Activated B cell treated with CpG ODN at 0.5 μM for 24 hours (primary cell): ENCODE measurements at regions of chr1 and their contacts with region 1.

Region 1: GRCh38 chr1:50774759-50775351 is 185.2 kb downstream of the FAF1 start:
- DNase-seq: no peak
- ATAC-seq: no peak
- H3K4me3 Mint-ChIP-seq: no peak overlapping the region
- H3K27ac Mint-ChIP-seq: no peak overlapping the region
- H3K4me1 Mint-ChIP-seq: peaks cover 5% of the 10 kb centered on the region
- H3K27me3 Mint-ChIP-seq: no peaks in the 10 kb centered on the region
- CTCF ChIP-seq: peak; percentile 86

Region 2: GRCh38 chr1:50724626-50725286 is 50.1 kb before region 1 on chr1:
- CTCF ChIA-PET with region 1: no interaction called
- POLR2A ChIA-PET with region 1: no interaction called
- intact Hi-C with region 1: no loop called
- DNase-seq: no peak
- ATAC-seq: peak; percentile 75
- H3K4me3 Mint-ChIP-seq: no peak overlapping the region
- H3K27ac Mint-ChIP-seq: peak overlapping the region; percentile 62
- H3K4me1 Mint-ChIP-seq: peaks cover 42% of the 10 kb centered on the region
- H3K27me3 Mint-ChIP-seq: no peaks in the 10 kb centered on the region
- CTCF ChIP-seq: no peak

Region 3: DNA sequence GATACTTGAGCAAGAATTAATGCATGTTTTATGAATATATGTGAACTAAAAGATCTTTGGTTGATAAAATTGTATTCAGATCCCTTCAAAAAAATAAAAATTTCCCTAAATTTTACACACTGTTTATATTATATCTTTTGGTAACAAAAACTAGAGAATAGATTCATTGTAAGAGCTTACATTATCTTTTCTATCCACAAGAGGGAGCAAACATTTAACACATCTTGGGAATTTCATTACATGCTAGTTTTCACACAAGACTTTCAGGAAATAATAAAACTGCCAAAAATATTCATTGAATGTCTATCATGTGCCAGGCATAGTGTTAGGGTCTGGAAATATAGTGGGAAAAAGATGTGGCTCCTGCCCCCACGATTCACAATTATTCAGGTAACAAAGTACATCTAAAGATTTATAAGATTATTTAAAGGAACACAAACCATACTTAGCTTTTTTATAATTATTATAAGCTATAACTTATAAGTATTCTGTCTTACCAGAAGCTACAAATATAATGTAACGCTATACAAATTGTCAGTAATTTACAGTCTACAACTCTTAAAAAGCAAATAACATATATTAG is 154.6 kb after region 1 on chr1:
- CTCF ChIA-PET with region 1: interaction called, 12 read pairs
- POLR2A ChIA-PET with region 1: no interaction called
- intact Hi-C with region 1: loop called (anchors 10 kb)
- DNase-seq: no peak
- ATAC-seq: no peak
- H3K4me3 Mint-ChIP-seq: no peak overlapping the region
- H3K27ac Mint-ChIP-seq: no peak overlapping the region
- H3K4me1 Mint-ChIP-seq: peaks cover 34% of the 10 kb centered on the region
- H3K27me3 Mint-ChIP-seq: no peaks in the 10 kb centered on the region
- CTCF ChIP-seq: no peak

Region 4: GRCh38 chr1:51044834-51045233 is 270.0 kb after region 1 on chr1:
- CTCF ChIA-PET with region 1: interaction called, 3 read pairs
- POLR2A ChIA-PET with region 1: no interaction called
- intact Hi-C with region 1: loop called (anchors 1 kb)
- DNase-seq: no peak
- ATAC-seq: no peak
- H3K4me3 Mint-ChIP-seq: no peak overlapping the region
- H3K27ac Mint-ChIP-seq: no peak overlapping the region
- H3K4me1 Mint-ChIP-seq: no peaks in the 10 kb centered on the region
- H3K27me3 Mint-ChIP-seq: peaks cover 12% of the 10 kb centered on the region
- CTCF ChIP-seq: no peak

Region 5: DNA sequence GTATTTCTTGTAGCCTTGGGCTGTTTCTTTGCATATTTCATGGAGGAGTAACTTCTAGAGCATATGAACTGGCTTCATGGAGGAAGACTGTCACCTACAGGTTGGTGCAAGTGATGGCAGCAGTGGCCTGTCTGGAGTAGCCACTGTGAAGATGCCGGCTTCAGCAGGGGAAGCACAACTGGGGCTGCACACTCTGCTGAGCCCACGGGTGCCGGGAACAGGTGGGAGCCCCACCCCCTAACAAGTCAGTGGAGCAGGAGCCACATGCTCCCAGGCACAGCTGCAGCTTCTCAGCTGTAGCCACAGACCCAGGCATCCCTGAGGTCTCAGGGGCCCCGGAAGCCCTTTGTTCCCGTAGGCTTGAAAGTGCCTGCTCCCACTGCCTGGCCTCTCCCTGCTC is 284.0 kb after region 1 on chr1:
- CTCF ChIA-PET with region 1: interaction called, 3 read pairs
- POLR2A ChIA-PET with region 1: no interaction called
- intact Hi-C with region 1: loop called (anchors 2 kb)
- DNase-seq: no peak
- ATAC-seq: no peak
- H3K4me3 Mint-ChIP-seq: no peak overlapping the region
- H3K27ac Mint-ChIP-seq: no peak overlapping the region
- H3K4me1 Mint-ChIP-seq: no peaks in the 10 kb centered on the region
- H3K27me3 Mint-ChIP-seq: peaks cover 13% of the 10 kb centered on the region
- CTCF ChIP-seq: no peak

Region 6: GRCh38 chr1:51296383-51297357 is 521.8 kb after region 1 on chr1:
- CTCF ChIA-PET with region 1: interaction called, 4 read pairs
- POLR2A ChIA-PET with region 1: no interaction called
- intact Hi-C with region 1: loop called (anchors 1 kb)
- DNase-seq: peak; percentile 71
- ATAC-seq: peak; percentile 65
- H3K4me3 Mint-ChIP-seq: peak overlapping the region; percentile 68
- H3K27ac Mint-ChIP-seq: no peak overlapping the region
- H3K4me1 Mint-ChIP-seq: peaks cover 8% of the 10 kb centered on the region
- H3K27me3 Mint-ChIP-seq: peaks cover 2% of the 10 kb centered on the region
- CTCF ChIP-seq: peak; percentile 74